T-cell (primary cell): ENCODE measurements at regions of chr12 and their contacts with region 1.

Region 1: DNA sequence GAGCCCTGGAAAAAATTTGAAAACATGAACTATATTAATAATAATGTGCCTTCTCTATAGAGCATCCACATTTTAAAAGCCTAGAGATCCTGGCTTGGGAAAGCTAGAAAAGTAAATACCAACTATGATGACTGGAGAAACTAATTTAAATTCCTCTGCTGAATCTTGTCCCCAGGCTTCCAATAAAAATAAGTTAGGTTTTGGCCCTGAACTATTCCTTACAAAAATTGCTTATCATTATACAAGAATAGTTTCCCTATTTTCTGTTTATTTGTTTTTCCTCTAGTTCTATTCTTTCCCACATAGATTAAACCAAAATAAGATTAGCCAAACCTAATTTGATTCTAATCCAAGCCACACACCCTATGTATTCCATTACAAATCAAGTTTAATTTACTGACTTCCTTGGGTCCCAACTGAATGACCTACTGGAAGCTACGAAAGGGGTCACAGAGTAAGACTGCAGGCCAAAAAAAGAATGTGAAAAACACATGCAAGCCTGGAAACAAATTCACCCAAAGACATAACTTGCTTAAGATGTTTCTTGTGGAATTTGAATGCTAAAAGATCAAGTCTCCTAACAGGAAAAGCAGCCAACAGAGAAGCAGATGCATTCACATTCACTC is 133.0 kb downstream of the PAWR start:
- DNase-seq: no peak
- ATAC-seq: no peak
- H3K4me3 ChIP-seq: no peak overlapping the region
- H3K4me3 Mint-ChIP-seq: no peak overlapping the region
- H3K27ac ChIP-seq: no peak overlapping the region
- H3K27ac Mint-ChIP-seq: no peak overlapping the region
- H3K4me1 ChIP-seq: no peaks in the 10 kb centered on the region
- H3K4me1 Mint-ChIP-seq: no peaks in the 10 kb centered on the region
- H3K27me3 ChIP-seq: no peaks in the 10 kb centered on the region
- H3K27me3 Mint-ChIP-seq: no peaks in the 10 kb centered on the region

Region 2: GRCh38 chr12:79645235-79645630 is 87.4 kb after region 1 on chr12:
- CTCF ChIA-PET with region 1: no interaction called
- POLR2A ChIA-PET with region 1: interaction called in 1 of 2 experiments, 10 read pairs
- DNase-seq: no peak
- ATAC-seq: no peak
- H3K4me3 ChIP-seq: no peak overlapping the region
- H3K4me3 Mint-ChIP-seq: no peak overlapping the region
- H3K27ac ChIP-seq: no peak overlapping the region
- H3K27ac Mint-ChIP-seq: no peak overlapping the region
- H3K4me1 ChIP-seq: no peaks in the 10 kb centered on the region
- H3K4me1 Mint-ChIP-seq: no peaks in the 10 kb centered on the region
- H3K27me3 ChIP-seq: no peaks in the 10 kb centered on the region
- H3K27me3 Mint-ChIP-seq: peaks cover 0 to 1% of the 10 kb centered on the region in 2 donors

Region 3: GRCh38 chr12:79747274-79747673 is 189.5 kb after region 1 on chr12:
- CTCF ChIA-PET with region 1: no interaction called
- POLR2A ChIA-PET with region 1: interaction called in 1 of 2 experiments, 20 read pairs
- DNase-seq: no peak
- ATAC-seq: no peak
- H3K4me3 ChIP-seq: no peak overlapping the region
- H3K4me3 Mint-ChIP-seq: no peak overlapping the region
- H3K27ac ChIP-seq: no peak overlapping the region
- H3K27ac Mint-ChIP-seq: no peak overlapping the region
- H3K4me1 ChIP-seq: no peaks in the 10 kb centered on the region
- H3K4me1 Mint-ChIP-seq: no peaks in the 10 kb centered on the region
- H3K27me3 ChIP-seq: peaks cover 0 to 15% of the 10 kb centered on the region in 2 experiments
- H3K27me3 Mint-ChIP-seq: peaks cover 0 to 11% of the 10 kb centered on the region in 2 donors